HEK293T (cell line): ENCODE measurements at regions of chr20 and their contacts with region 1.

Region 1: GRCh38 chr20:23050847-23051631 is 1.6 kb upstream of the THBD start:
- DNase-seq: peak; percentile 68

Region 2: DNA sequence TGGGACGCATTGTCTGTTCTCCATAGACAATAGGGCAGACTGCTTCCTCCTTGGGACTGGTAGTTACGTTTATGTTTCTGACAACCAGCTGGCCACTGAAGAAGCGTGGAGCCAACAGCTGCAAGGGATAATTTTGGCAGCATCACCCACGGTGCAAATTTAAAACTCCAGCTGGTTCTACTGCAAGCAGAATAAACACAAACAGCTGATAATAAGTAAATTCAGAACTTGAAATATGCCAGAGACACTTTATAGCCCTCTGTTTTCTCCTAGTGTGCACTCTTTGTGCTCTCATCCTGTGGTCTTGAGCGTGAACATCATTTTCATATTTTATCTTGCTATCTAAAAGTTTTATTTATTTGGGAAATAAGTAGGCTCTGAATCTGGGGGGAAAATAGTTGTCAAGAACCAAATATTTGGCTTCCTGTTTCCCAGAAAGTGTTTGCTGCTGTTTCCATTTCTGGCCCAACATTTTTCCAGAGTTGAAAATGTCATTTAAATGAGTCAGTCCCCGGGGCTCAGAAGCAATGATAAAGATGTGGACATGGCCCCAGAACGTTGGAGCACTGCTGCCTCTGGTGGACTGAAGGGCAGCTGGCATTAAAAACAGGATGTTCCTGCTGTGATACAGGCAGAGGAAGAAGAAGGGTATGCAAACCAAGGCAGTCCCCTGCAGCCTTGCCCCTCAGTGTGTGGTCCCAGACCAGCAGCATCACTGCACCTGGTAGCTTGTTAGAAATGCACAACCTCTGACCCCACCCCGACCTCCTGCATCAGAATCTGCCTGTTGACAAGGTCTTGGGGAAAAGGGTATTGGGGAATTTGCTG is 10.9 kb after region 1 on chr20:
- CTCF ChIA-PET with region 1: interaction called, 15 read pairs
- POLR2A ChIA-PET with region 1: interaction called, 24 read pairs
- DNase-seq: peak; percentile 25

Region 3: GRCh38 chr20:23200918-23201317 is 149.9 kb after region 1 on chr20:
- CTCF ChIA-PET with region 1: no interaction called
- POLR2A ChIA-PET with region 1: interaction called, 11 read pairs
- DNase-seq: peak; percentile 41

Region 4: DNA sequence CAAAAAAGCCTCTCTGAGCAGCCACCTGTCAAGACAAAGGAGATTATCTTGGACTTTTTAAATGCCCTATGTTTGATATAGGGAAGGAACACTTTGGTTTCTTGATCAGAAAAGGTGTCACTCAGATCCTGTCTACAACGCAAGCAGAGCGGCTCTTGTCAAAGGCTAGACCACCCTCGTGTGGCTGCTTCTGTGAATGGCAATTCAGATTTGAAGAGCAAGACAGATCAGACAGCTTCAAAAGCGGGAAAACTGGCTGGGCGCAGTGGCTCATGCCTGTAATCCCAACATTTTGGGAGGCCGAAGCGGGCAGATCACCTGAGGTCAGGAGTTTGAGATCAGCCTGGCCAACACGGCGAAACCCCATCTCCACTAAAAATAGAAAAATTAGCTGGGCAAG is 289.5 kb after region 1 on chr20:
- CTCF ChIA-PET with region 1: interaction called, 3 read pairs
- POLR2A ChIA-PET with region 1: interaction called, 11 read pairs
- DNase-seq: peak; percentile 64